ENCODE measurements at regions of chr2 and their contacts with region 1.

Region 1: DNA sequence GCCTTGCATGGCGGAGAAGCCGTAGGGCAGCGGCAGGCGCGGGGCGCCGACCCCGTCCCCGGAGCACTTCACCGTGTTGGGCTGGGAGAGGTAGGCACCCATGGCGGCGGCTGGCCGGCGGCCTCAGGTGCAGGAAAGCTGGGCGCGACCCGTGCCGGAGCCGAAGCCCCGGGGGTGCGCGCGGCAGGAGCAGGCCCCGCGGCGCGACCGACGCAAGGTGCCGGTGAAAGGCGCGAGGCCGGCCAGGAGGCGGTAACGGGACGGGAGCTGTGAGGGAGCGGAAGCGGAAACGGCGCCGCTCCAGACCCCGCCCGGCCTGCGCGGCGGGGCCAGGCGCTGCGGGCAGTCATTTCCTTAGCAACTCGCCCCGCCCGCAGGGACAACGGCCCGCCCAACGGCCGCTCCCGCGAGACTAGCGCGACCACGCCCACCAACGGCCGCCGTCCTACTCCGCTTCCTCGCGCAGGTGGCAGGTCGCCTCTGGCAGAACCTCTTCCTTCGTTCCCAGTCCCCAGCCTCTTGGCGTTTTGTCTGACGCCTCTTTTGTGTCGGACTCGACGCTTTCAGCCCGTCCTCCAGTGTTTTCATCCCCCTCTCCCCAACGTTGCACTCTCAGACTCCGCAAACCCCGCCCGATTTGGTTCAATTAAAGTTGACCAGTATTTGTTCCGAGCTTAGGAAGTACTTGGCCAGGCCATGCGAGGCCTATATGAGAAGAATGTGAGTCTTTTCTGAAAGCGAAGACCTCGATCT is at the start of gene PPM1G:
- DNase-seq: peak; percentile 97
- H3K4me3 ChIP-seq: peak within 1 kb of the TSS; percentile 91
- H3K27ac ChIP-seq: peak within 1 kb of the TSS; percentile 84
- H3K4me1 ChIP-seq: peaks cover 24% of the 10 kb centered on the region
- CTCF ChIP-seq: no peak
- total RNA-seq, gene PPM1G: 101 and 113 TPM in 2 replicates

Region 2: DNA sequence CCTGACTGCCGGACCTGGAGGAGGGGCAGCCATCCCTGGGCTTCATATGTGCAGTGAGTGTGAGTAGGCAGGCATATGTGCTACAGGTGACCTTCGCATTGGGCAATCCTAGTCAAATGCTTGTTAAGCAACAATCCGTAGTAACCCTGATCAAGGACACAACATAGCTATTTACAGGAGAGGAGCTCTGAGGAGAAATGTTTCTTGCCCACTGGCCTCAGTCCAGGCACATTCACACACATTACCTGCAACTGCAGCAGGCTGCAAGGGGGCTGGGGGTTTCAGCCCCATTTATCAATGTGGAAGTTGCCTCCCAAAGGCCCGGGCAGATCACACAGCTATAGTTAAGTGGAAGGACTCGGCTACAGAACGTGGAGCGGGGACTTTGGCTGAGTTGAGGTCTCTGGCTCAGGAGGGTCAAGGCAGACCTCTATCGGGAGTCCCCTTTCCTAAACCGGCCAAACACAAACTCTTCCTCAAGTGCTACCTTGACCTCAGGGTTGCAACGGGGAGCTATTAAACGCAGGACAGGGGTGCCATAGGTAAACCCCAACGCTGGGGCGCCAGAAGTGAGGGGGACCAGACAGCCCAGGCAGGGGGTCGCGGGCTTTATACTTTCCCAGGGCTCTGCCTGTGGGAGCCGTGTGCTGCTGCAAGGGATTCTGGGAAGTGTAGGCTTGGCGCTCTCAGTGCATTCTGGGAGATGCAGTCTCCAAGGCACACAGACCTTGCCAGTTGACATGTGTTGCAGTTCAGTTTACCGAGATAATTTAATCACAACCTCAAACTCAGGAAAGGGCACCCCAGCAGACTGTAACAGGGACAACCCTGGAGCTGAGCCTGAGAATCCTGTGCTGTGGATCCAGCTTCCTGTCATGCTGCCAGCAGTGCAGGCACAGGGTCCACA is 313.5 kb before region 1 on chr2:
- CTCF ChIA-PET with region 1: no interaction called
- POLR2A ChIA-PET with region 1: no interaction called
- intact Hi-C with region 1: no loop called
- DNase-seq: peak; percentile 75
- H3K4me3 ChIP-seq: peak overlapping the region; percentile 54
- H3K27ac ChIP-seq: no peak overlapping the region
- H3K4me1 ChIP-seq: peaks cover 14% of the 10 kb centered on the region
- CTCF ChIP-seq: no peak

Region 3: DNA sequence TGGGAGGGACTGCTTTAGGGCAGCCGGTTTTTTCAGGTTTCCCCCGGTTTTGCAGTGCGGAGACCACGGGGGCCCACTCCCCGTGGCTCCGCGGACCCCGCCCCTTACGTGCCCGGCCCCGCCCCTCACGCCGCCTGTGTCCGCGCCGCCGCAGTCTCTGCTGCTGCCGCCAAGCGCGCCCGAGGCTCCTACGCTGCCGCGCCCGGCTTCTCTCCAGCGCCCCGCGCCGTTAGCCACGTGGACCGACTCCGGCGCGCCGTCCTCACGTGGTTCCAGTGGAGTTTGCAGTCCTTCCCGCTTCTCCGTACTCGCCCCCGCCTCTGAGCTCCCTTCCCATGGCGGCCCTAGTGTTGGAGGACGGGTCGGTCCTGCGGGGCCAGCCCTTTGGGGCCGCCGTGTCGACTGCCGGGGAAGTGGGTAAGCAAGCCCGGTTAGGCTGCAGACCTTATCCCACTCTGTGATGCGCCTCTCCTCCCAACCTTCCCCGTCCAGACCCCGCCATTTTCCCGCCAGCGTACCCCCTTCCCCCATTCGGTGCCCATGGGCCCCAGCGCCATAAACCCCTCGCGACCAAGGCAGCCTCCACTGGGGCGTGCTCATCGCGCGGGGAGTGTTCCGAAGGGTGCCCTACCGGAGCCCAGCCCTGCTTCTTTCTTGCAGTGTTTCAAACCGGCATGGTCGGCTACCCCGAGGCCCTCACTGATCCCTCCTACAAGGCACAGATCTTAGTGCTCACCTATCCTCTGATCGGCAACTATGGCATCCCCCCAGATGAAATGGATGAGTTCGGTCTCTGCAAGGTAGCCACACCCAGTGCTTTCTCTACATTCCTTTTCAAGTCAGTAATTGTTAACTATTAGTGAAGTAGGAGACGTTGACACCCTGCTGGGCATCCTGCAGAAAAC is 192.0 kb before region 1 on chr2 and contains the start of gene CAD:
- CTCF ChIA-PET with region 1: no interaction called
- POLR2A ChIA-PET with region 1: no interaction called
- intact Hi-C with region 1: no loop called
- DNase-seq: peak; percentile 93
- H3K4me3 ChIP-seq: peak within 1 kb of the TSS; percentile 86
- H3K27ac ChIP-seq: peak within 1 kb of the TSS; percentile 77
- H3K4me1 ChIP-seq: peaks cover 41% of the 10 kb centered on the region
- CTCF ChIP-seq: peak; percentile 36; the same call in 1 of the 2 replicates
- total RNA-seq, gene CAD: 118 and 132 TPM in 2 replicates

Region 4: GRCh38 chr2:27322766-27323595 is 86.5 kb before region 1 on chr2 and contains the start of gene MPV17:
- CTCF ChIA-PET with region 1: no interaction called
- POLR2A ChIA-PET with region 1: no interaction called
- intact Hi-C with region 1: no loop called
- DNase-seq: peak; percentile 91
- H3K4me3 ChIP-seq: peak within 1 kb of the TSS; percentile 84
- H3K27ac ChIP-seq: peak within 1 kb of the TSS; percentile 58
- H3K4me1 ChIP-seq: peaks cover 16% of the 10 kb centered on the region
- CTCF ChIP-seq: no peak
- total RNA-seq, gene MPV17: 54.1 and 63.9 TPM in 2 replicates

Region 5: DNA sequence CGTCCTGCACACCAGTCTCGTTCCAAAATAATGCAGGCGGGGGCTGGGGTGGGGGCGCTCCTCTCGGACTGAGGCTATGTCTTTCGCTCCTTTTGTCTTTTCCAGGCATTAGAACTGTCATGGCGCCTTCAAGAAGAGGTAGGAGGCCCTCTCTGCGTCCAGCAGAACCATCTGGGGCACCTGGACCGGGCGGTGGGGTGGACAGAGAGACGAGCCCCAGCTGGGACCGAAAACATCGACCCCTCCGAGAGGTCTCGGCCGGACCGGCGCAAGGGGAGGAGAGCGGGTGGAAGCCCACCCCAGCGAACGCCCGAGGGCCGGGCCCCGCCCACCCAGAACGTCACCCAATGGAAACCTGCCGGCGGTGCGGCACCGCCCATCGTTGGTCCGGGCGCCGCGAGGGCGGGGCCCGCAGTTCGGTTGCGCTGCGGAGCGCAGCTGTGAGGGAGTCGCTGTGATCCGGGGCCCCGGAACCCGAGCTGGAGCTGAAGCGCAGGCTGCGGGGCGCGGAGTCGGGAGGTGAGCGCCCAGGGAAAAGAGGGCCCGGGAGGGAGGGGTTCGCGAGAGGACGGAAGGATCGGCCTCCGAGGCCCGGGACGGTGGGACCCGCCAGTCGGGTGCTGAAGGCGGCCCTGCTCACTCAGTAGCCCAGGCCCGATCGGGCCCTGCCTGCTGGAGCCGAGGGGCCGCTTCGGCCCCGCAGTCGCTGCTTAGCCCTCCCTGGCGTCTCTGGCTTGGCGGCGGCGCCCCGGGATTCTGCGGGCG is 18.9 kb after region 1 on chr2 and contains the start of gene NRBP1:
- CTCF ChIA-PET with region 1: interaction called, 4 read pairs
- POLR2A ChIA-PET with region 1: interaction called, 24 read pairs
- intact Hi-C with region 1: loop called (anchors 1 kb)
- DNase-seq: peak; percentile 96
- H3K4me3 ChIP-seq: peak within 1 kb of the TSS; percentile 86
- H3K27ac ChIP-seq: peak within 1 kb of the TSS; percentile 76
- H3K4me1 ChIP-seq: peaks cover 21% of the 10 kb centered on the region
- CTCF ChIP-seq: peak; percentile 66
- total RNA-seq, gene NRBP1: 27.9 and 28.5 TPM in 2 replicates

Region 6: GRCh38 chr2:27520316-27520715 is 110.8 kb after region 1 on chr2:
- CTCF ChIA-PET with region 1: no interaction called
- POLR2A ChIA-PET with region 1: no interaction called
- intact Hi-C with region 1: no loop called
- DNase-seq: no peak
- H3K4me3 ChIP-seq: no peak overlapping the region
- H3K27ac ChIP-seq: no peak overlapping the region
- H3K4me1 ChIP-seq: no peaks in the 10 kb centered on the region
- CTCF ChIP-seq: no peak

Region 7: GRCh38 chr2:27582695-27583389 is 173.3 kb after region 1 on chr2 and contains the start of gene ZNF512:
- CTCF ChIA-PET with region 1: no interaction called
- POLR2A ChIA-PET with region 1: no interaction called
- intact Hi-C with region 1: loop called (anchors 2 kb)
- DNase-seq: peak; percentile 98
- H3K4me3 ChIP-seq: peak within 1 kb of the TSS; percentile 87
- H3K27ac ChIP-seq: peak within 1 kb of the TSS; percentile 54
- H3K4me1 ChIP-seq: peaks cover 29% of the 10 kb centered on the region
- CTCF ChIP-seq: peak; percentile 41
- total RNA-seq, gene ZNF512: 40.7 and 54.0 TPM in 2 replicates

Region 8: GRCh38 chr2:27628767-27629709 is 219.5 kb after region 1 on chr2 and contains the starts of genes CCDC121 and GPN1:
- CTCF ChIA-PET with region 1: no interaction called
- POLR2A ChIA-PET with region 1: no interaction called
- intact Hi-C with region 1: loop called (anchors 5 kb)
- DNase-seq: peak; percentile 92
- H3K4me3 ChIP-seq: peak within 1 kb of the TSS; percentile 96
- H3K27ac ChIP-seq: peak within 1 kb of the TSS; percentile 81
- H3K4me1 ChIP-seq: peaks cover 32% of the 10 kb centered on the region
- CTCF ChIP-seq: no peak
- total RNA-seq, gene CCDC121: 5.1 and 9.2 TPM in 2 replicates
- total RNA-seq, gene GPN1: 29.5 and 31.1 TPM in 2 replicates

Region 9: DNA sequence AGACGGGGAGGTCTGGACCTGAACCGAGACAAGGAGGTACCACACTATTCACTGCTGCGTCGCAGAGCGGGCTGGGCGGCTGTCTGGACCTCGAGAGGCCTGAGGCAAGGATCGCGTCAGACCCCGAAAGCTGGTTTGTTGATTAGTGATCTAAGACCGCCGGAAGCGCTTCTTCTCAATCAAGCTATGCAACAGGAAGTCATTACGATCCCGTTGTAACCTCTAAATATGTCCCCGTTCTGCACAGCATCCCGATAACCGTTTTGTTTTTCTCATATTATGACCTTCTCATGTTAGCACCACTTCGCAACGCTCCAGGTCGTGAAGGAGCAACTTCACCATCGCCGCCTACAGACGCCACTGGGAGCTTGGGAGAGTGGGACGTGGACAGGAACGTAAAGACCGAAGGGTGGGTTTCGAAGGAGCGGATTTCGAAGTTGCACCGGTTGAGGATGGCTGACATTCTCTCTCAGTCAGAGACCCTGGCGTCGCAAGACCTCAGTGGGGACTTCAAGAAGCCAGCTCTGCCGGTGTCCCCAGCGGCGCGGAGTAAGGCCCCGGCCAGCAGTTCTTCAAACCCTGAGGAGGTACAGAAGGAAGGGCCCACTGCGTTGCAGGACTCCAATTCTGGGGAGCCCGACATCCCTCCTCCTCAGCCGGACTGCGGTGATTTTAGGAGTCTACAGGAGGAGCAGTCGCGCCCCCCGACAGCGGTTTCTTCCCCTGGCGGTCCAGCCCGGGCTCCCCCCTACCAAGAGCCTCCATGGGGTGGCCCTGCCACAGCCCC is 254.2 kb after region 1 on chr2 and contains the starts of genes SLC4A1AP and SUPT7L:
- CTCF ChIA-PET with region 1: no interaction called
- POLR2A ChIA-PET with region 1: no interaction called
- intact Hi-C with region 1: loop called (anchors 10 kb)
- DNase-seq: peak; percentile 92
- H3K4me3 ChIP-seq: peak within 1 kb of the TSS; percentile 93
- H3K27ac ChIP-seq: peak within 1 kb of the TSS; percentile 89
- H3K4me1 ChIP-seq: peaks cover 23% of the 10 kb centered on the region
- CTCF ChIP-seq: peak; percentile 13; the same call in 1 of the 2 replicates
- total RNA-seq, gene SLC4A1AP: 26.2 and 36.7 TPM in 2 replicates
- total RNA-seq, gene SUPT7L: 32.3 and 33.6 TPM in 2 replicates

Measured in OCI-LY7 (cell line).